ENCODE measurements at regions of chr17 and their contacts with region 1.

Region 1: GRCh38 chr17:56638591-56639051 is 45.1 kb downstream of the NOG start:
- H3K4me3 ChIP-seq: no peak overlapping the region
- H3K27ac ChIP-seq: no peak overlapping the region
- H3K4me1 ChIP-seq: no peaks in the 10 kb centered on the region; the same call in 1 of the 2 replicates
- CTCF ChIP-seq: no peak

Region 2: GRCh38 chr17:56653877-56654276 is 15.3 kb after region 1 on chr17:
- CTCF ChIA-PET with region 1: interaction called, 19 read pairs
- POLR2A ChIA-PET with region 1: no interaction called
- H3K4me3 ChIP-seq: no peak overlapping the region
- H3K27ac ChIP-seq: no peak overlapping the region
- H3K4me1 ChIP-seq: no peaks in the 10 kb centered on the region
- CTCF ChIP-seq: peak; percentile 39; the same call in 1 of the 2 replicates